CD14-positive monocyte (primary cell): ENCODE measurements at regions of chr1 and their contacts with region 1.

Region 1: DNA sequence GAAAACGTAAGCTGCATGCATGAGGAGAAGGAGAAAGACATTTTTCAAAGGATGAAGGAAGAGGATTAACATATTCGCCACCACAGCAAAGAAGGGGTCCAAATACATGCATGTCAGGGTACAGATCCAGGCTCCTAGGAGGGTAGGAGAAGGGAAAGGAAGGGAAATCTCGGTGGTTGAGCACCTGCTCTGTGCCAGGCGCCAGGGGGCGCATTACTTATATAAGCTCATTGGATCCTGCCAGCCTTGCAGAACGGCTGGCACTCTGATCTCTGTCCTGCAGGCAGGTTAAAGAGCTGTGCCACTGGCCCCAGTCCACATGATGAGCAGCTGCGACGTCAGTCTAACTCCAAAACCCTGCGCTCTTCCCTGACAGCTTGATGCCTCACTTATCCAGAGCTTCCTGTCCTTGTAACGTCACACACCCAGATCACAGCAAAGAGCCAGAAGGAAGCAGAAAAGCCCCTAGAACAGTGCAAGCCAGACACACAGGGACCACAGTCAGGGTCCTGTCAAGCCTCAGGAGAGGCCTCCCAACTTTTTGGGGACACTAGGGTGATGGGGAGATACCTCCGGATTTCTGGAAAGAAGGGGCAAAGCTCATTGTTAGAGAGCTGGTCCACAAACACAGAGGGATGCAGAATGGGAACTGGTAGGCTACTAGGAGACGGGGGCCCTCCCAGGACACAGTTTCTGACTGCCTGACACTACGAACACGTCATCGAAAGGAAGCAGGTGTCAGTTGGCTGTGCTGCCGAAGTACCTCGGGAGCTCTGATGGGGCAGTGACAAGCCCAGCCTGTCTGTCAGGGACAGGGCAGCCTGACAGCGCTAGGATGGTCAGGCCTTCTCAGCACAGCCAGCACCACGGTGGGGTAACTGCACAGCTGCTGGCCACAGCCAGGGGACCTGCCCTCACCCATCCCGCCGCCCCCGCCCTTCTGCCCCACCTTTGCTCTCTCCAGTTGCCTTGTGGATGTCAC is 99.1 kb downstream of the BEND5 start:
- DNase-seq: peak; percentile 28 to 50 (median 46)
- H3K4me3 ChIP-seq: no peak overlapping the region
- H3K4me3 Mint-ChIP-seq: peak overlapping the region in 1 of 2 donors; percentile 33
- H3K27ac ChIP-seq: no peak overlapping the region
- H3K27ac Mint-ChIP-seq: no peak overlapping the region
- H3K4me1 ChIP-seq: no peaks in the 10 kb centered on the region
- H3K4me1 Mint-ChIP-seq: peaks cover 26% of the 10 kb centered on the region
- H3K27me3 ChIP-seq: no peaks in the 10 kb centered on the region
- H3K27me3 Mint-ChIP-seq: peaks cover 0 to 3% (median 0%) of the 10 kb centered on the region in 3 donors
- CTCF ChIP-seq: peak; percentile 85

Region 2: GRCh38 chr1:48563021-48563420 is 114.6 kb before region 1 on chr1:
- intact Hi-C with region 1: no loop called
- DNase-seq: no peak
- H3K4me3 ChIP-seq: no peak overlapping the region
- H3K4me3 Mint-ChIP-seq: no peak overlapping the region
- H3K27ac ChIP-seq: no peak overlapping the region
- H3K27ac Mint-ChIP-seq: no peak overlapping the region
- H3K4me1 ChIP-seq: no peaks in the 10 kb centered on the region
- H3K4me1 Mint-ChIP-seq: peaks cover 13% of the 10 kb centered on the region
- H3K27me3 ChIP-seq: no peaks in the 10 kb centered on the region
- H3K27me3 Mint-ChIP-seq: peaks cover 0 to 4% (median 1%) of the 10 kb centered on the region in 3 donors
- CTCF ChIP-seq: no peak

Region 3: DNA sequence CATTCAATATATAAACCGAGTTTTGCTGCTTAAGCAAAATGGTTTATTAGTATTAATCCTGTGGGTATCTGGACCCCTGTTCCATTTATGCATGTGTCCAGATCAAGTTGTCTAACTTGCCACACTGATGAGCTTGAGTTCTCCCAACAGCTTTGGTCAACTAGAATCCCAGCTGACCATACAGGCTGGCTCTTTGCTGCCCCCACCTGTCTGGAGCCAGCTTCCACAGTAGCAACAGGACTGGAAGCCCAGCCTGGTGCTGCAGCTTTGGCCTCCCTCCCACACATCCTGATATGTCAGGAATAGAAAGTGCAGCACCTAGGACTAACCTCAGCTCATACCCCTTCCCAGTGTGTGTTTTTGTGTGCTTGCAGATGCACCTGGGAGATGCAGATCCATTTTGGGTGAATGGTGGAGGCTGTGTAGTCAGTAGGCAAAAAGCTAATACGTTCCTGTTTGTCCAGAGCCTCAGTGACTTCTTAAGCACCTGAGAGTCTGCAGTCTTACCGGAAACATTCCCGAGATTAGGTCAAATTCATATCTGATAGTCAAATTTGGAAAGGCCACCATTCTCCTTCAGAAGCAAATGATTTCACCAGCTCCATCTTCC is 140.0 kb after region 1 on chr1:
- intact Hi-C with region 1: loop called in 1 of 2 experiments (anchors 5 kb)
- DNase-seq: peak; percentile 2 to 30 (median 25)
- H3K4me3 ChIP-seq: no peak overlapping the region
- H3K4me3 Mint-ChIP-seq: no peak overlapping the region
- H3K27ac ChIP-seq: no peak overlapping the region
- H3K27ac Mint-ChIP-seq: no peak overlapping the region
- H3K4me1 ChIP-seq: no peaks in the 10 kb centered on the region
- H3K4me1 Mint-ChIP-seq: no peaks in the 10 kb centered on the region
- H3K27me3 ChIP-seq: no peaks in the 10 kb centered on the region
- H3K27me3 Mint-ChIP-seq: peaks cover 0 to 1% (median 0%) of the 10 kb centered on the region in 3 donors
- CTCF ChIP-seq: peak; percentile 75